AG04449 (cell line): ENCODE measurements at regions of chr12 and their contacts with region 1.

Region 1: GRCh38 chr12:55940065-55940732 is 9.2 kb downstream of the DGKA start:
- DNase-seq: no peak
- H3K4me3 ChIP-seq: no peak overlapping the region
- CTCF ChIP-seq: peak; percentile 93

Region 2: GRCh38 chr12:55806982-55807381 is 133.2 kb before region 1 on chr12:
- CTCF ChIA-PET with region 1: interaction called, 10 read pairs
- POLR2A ChIA-PET with region 1: no interaction called
- DNase-seq: no peak
- H3K4me3 ChIP-seq: no peak overlapping the region
- CTCF ChIP-seq: no peak

Region 3: GRCh38 chr12:55829967-55830600 is 110.1 kb before region 1 on chr12:
- CTCF ChIA-PET with region 1: interaction called, 12 read pairs
- POLR2A ChIA-PET with region 1: interaction called, 9 read pairs
- DNase-seq: no peak
- H3K4me3 ChIP-seq: peak overlapping the region; percentile 78
- CTCF ChIP-seq: no peak

Region 4: GRCh38 chr12:55926738-55927587 is 13.2 kb before region 1 on chr12:
- CTCF ChIA-PET with region 1: interaction called, 92 read pairs
- POLR2A ChIA-PET with region 1: interaction called, 3 read pairs
- DNase-seq: peak; percentile 60
- H3K4me3 ChIP-seq: peak overlapping the region; percentile 84
- CTCF ChIP-seq: peak; percentile 80

Region 5: GRCh38 chr12:55966408-55967281 is 26.4 kb after region 1 on chr12 and contains the start of gene CDK2:
- CTCF ChIA-PET with region 1: interaction called, 12 read pairs
- POLR2A ChIA-PET with region 1: no interaction called
- DNase-seq: no peak
- H3K4me3 ChIP-seq: peak within 1 kb of the TSS; percentile 85
- CTCF ChIP-seq: no peak